PC-9 (cell line): ENCODE measurements at regions of chr13 and their contacts with region 1.

Region 1: DNA sequence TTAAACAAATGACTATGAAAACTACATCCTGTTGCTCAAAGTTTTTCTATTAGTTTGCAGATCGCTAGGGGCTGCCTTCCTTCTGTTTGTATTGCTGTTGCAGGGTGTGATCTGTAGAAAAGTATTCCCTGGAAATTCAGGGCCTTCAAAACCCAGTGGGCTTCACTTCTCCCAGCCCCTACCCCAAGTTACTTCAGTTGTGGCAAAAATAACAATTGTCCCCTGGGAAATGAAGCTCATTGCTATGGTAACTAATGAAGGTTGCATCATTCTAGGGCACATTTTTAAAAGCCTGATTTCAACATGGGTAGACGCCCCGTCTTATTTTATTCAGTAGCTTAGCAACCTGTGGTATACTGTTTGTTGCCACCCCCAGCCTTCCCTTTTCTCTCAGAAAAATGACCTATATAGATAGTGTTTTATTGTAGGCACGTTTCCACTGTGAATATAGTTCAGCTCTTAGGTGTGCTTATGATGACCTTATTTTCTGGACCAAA is 60.9 kb downstream of the WDFY2 start:
- DNase-seq: peak; percentile 22 to 63
- H3K4me3 ChIP-seq: no peak overlapping the region
- H3K27ac ChIP-seq: peak overlapping the region; percentile 91
- H3K4me1 ChIP-seq: peaks cover 47% of the 10 kb centered on the region
- H3K27me3 ChIP-seq: no peaks in the 10 kb centered on the region
- CTCF ChIP-seq: no peak

Region 2: DNA sequence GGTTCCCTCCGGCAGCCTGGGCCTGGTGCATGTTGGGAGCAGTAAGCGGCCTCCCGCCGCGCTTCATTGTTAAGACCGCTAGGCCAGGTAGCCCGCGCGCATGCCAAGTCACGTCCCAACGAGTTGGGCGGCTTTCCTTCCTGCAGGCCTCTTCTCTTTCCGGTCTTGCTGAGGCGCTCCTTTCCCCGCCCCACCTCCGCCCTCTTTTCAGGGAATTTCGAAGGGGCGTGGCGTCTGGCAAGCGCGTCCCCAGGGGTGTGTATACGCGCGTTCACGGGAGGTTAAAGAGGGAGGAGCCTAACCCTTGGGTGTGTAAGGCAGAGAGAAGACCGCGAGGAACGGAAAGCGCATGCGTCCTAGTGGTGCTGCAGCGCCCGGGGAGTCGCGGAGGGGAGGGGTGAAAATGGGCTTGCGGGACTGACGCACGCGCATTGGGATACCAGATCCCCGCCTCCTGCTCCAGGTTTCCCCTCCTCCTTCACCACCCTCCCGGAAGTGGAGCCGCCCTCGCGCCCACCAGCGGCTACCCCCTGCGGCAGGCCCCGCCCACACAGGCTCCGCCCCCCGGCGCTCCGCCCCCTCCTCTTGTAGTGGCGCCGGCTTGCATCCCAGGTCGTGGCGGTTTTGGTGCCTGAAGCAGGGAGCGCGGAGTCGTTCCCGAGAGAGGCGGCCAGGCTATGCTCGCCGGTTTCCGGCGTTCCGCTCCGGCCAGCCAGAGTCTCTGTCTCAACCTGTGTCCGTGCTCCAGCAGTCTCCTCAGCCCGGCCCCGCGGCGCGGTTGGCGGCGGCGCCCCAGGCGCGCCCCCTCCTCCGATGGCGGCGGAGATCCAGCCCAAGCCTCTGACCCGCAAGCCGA is 61.1 kb before region 1 on chr13 and contains the start of gene WDFY2:
- CTCF ChIA-PET with region 1: no interaction called
- POLR2A ChIA-PET with region 1: interaction called, 5 read pairs
- intact Hi-C with region 1: loop called (anchors 1 kb)
- DNase-seq: peak; percentile 98 to 99
- H3K4me3 ChIP-seq: peak within 1 kb of the TSS; percentile 91
- H3K27ac ChIP-seq: peak within 1 kb of the TSS; percentile 69
- H3K4me1 ChIP-seq: peaks cover 28% of the 10 kb centered on the region
- H3K27me3 ChIP-seq: no peaks in the 10 kb centered on the region
- CTCF ChIP-seq: 0 out of 2 replicates have a peak, but pooled peaks have one; percentile 11
- total RNA-seq, gene WDFY2: 14.1 and 14.3 TPM in 2 replicates

Region 3: GRCh38 chr13:51601601-51602565 is 43.3 kb before region 1 on chr13:
- CTCF ChIA-PET with region 1: no interaction called
- POLR2A ChIA-PET with region 1: no interaction called
- intact Hi-C with region 1: no loop called
- DNase-seq: peak; percentile 15 to 64
- H3K4me3 ChIP-seq: no peak overlapping the region
- H3K27ac ChIP-seq: no peak overlapping the region
- H3K4me1 ChIP-seq: peaks cover 36% of the 10 kb centered on the region
- H3K27me3 ChIP-seq: no peaks in the 10 kb centered on the region
- CTCF ChIP-seq: no peak

Region 4: DNA sequence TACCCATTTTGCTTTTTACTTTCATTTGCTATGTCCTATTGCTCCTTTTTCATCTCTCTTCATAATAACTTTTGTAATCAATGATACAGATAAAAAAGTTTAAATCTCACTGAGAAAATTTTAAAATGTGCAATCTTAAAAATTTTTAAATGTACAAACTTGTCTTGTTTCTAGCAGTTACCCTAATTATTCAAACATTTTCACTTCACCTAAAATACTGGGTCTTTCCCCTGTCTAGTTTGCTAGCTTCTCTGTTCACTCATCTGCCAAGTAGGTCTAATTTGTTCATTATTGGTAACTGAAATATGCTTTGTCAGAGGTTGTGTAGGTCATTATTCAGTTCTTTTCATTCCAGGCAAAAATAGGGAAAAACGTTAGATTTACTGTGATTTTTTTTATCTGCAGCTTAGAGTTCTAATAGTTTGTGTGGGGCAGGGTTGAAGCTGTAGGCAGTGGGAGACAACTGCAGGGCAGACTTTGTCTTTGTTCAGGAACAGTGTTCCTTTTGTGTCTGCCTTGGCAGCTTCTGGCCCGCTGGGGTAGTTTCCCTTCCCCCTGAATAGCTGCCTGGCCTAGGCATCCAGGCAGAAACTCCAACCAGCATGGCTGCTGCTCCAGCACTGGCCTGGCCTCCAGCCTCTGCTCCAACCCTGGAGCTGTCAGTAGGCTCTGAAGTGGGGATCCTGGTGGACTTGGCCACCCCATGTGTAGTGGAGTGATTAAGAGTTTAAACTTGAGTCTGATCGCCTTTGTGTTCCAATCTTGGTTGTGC is 12.4 kb before region 1 on chr13:
- CTCF ChIA-PET with region 1: interaction called, 12 read pairs
- POLR2A ChIA-PET with region 1: no interaction called
- intact Hi-C with region 1: no loop called
- DNase-seq: no peak
- H3K4me3 ChIP-seq: no peak overlapping the region
- H3K27ac ChIP-seq: no peak overlapping the region
- H3K4me1 ChIP-seq: peaks cover 15% of the 10 kb centered on the region; the same call in 1 of the 2 replicates
- H3K27me3 ChIP-seq: no peaks in the 10 kb centered on the region
- CTCF ChIP-seq: no peak

Region 5: GRCh38 chr13:51674279-51674678 is 29.1 kb after region 1 on chr13:
- CTCF ChIA-PET with region 1: no interaction called
- POLR2A ChIA-PET with region 1: no interaction called
- intact Hi-C with region 1: loop called (anchors 1 kb)
- DNase-seq: peak; percentile 85 to 96
- H3K4me3 ChIP-seq: peak overlapping the region; percentile 45; the same call in 1 of the 2 replicates
- H3K27ac ChIP-seq: peak overlapping the region; percentile 90
- H3K4me1 ChIP-seq: peaks cover 39% of the 10 kb centered on the region
- H3K27me3 ChIP-seq: no peaks in the 10 kb centered on the region
- CTCF ChIP-seq: no peak

Region 6: GRCh38 chr13:51689663-51689996 is 44.4 kb after region 1 on chr13:
- CTCF ChIA-PET with region 1: no interaction called
- POLR2A ChIA-PET with region 1: no interaction called
- intact Hi-C with region 1: no loop called
- DNase-seq: no peak
- H3K4me3 ChIP-seq: no peak overlapping the region
- H3K27ac ChIP-seq: no peak overlapping the region
- H3K4me1 ChIP-seq: no peaks in the 10 kb centered on the region; the same call in 1 of the 2 replicates
- H3K27me3 ChIP-seq: no peaks in the 10 kb centered on the region
- CTCF ChIP-seq: no peak

Region 7: DNA sequence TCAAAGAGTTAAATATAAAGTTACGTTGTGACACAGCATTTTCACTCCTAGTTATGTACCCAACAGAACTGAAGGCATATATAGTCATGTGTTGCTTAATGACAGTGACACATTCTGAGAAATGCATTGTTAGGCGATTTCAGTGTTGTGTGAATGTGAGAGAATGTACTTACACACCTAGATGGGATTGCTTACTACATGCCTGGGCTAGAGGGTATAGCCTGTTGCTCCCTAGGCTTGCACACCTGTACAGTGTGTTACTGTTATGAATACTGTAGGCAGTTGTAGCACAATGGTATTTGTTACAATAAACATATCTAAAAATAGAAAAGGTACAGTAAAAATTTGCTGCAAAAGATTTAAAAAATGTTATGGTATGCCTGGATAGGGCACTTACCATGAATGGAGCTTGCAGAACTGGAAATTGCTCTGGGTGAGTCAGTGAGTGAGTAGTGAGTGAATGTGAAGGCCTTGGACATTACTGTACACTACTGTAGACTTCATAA is 69.5 kb after region 1 on chr13:
- CTCF ChIA-PET with region 1: no interaction called
- POLR2A ChIA-PET with region 1: no interaction called
- intact Hi-C with region 1: loop called (anchors 1 kb)
- DNase-seq: peak; percentile 44 to 96
- H3K4me3 ChIP-seq: 0 out of 2 replicates have a peak overlapping the region, but pooled peaks have one; percentile 10
- H3K27ac ChIP-seq: peak overlapping the region; percentile 98
- H3K4me1 ChIP-seq: peaks cover 28% of the 10 kb centered on the region
- H3K27me3 ChIP-seq: no peaks in the 10 kb centered on the region
- CTCF ChIP-seq: no peak

Region 8: GRCh38 chr13:51928231-51928630 is 283.0 kb after region 1 on chr13:
- CTCF ChIA-PET with region 1: no interaction called
- POLR2A ChIA-PET with region 1: no interaction called
- intact Hi-C with region 1: no loop called
- DNase-seq: no peak
- H3K4me3 ChIP-seq: no peak overlapping the region
- H3K27ac ChIP-seq: no peak overlapping the region
- H3K4me1 ChIP-seq: no peaks in the 10 kb centered on the region
- H3K27me3 ChIP-seq: no peaks in the 10 kb centered on the region
- CTCF ChIP-seq: no peak

Region 9: GRCh38 chr13:52830946-52831345 is 1185.7 kb after region 1 on chr13:
- CTCF ChIA-PET with region 1: no interaction called
- POLR2A ChIA-PET with region 1: no interaction called
- intact Hi-C with region 1: no loop called
- DNase-seq: no peak
- H3K4me3 ChIP-seq: no peak overlapping the region
- H3K27ac ChIP-seq: no peak overlapping the region
- H3K4me1 ChIP-seq: no peaks in the 10 kb centered on the region
- H3K27me3 ChIP-seq: peaks cover 31% of the 10 kb centered on the region
- CTCF ChIP-seq: no peak